Adrenal gland (tissue), 19 donors: ENCODE measurements at regions of chr17 and their contacts with region 1.

Region 1: DNA sequence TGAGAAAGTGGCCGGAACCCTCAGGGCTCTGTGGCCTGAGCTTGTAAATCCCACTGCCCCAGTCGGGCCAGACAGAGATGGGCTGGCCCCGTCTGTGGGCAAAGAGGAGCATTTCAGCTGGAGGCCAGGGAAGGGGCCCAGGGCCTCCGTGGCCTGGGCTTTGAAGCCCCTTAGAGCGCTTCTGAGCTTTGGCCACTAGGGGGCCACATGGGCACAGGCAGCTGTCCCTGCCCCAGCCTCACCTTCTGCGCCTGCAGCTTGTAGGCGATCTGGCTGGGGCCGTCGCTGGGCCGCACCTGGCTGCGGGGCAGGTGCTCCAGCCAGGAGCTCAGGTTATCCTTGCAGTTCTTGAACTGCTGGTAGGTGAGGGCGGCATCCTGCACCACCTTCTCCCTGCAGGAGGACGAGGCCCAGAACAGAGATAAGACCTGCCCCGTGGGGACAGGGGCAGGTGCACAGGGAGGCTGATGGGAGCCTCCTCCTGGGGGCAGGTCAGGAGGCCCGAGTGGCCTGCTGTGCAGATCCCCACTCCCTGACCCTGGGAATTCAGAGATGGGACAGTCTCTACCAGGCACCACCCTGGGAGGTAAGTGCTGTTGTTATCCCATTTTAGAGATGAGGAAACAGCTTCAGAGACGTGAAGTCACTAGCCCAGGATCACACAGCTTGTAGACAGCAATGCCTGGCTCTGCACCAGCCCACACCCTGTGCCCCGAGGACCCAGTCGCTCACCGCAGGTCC is 12.8 kb downstream of the EVPL start:
- DNase-seq: peak; percentile 61 to 85 (median 78)
- H3K4me3 ChIP-seq: no peak overlapping the region
- H3K27ac ChIP-seq: no peak overlapping the region
- H3K4me1 ChIP-seq: peaks cover 2 to 4% of the 10 kb centered on the region in 2 donors
- H3K27me3 ChIP-seq: no peaks in the 10 kb centered on the region
- CTCF ChIP-seq: peak; percentile 82 to 98 (median 92)
- POLR2A ChIP-seq: no peak

Region 2: DNA sequence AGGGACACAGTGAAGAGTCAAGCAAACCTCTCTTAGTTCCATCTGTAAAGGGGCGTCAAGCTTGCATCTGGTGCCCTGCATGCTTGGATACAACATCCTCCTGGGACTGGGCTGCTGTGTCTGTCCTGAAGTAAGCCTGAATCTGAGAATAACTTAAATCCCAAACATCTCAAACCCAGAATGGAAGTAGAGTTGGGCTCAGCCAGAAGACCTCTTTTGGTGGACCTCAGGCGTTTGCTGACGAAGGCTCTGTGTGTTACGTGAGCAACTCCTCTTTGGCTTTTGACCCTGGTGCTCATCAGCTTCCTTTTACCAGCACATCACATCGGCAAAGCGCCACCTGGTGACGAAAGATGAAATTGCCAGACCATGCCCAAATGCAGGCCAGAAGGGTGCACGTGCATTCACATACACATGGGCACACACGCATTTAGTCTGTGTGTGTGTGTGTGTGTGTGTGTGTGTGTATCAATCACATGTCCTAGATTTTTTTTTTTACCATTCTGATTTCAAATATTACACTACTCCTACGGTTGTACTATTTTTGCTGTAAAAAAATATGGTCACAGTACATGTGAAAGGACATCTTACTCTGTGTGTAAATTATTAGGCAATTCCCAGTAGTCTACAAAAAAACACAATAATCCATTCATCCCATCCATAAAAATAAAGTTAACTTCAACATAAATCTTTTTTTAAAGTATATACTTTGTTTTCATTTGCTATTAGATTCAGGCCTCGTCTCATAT is 167.8 kb after region 1 on chr17:
- intact Hi-C with region 1: loop called in 1 of 2 experiments (anchors 10 kb)
- DNase-seq: peak; percentile 87 to 97 (median 90)
- H3K4me3 ChIP-seq: no peak overlapping the region
- H3K27ac ChIP-seq: no peak overlapping the region
- H3K4me1 ChIP-seq: peaks cover 3% of the 10 kb centered on the region in 2 donors
- H3K27me3 ChIP-seq: no peaks in the 10 kb centered on the region
- CTCF ChIP-seq: peak; percentile 57 to 89 (median 85)
- POLR2A ChIP-seq: no peak

Region 3: GRCh38 chr17:76296186-76296585 is 281.8 kb after region 1 on chr17:
- intact Hi-C with region 1: loop called in 1 of 2 experiments (anchors 5 kb)
- DNase-seq: peak in 1 of 7 donors; percentile 39
- H3K4me3 ChIP-seq: no peak overlapping the region
- H3K27ac ChIP-seq: no peak overlapping the region
- H3K4me1 ChIP-seq: no peaks in the 10 kb centered on the region
- H3K27me3 ChIP-seq: no peaks in the 10 kb centered on the region
- CTCF ChIP-seq: no peak
- POLR2A ChIP-seq: no peak